ENCODE measurements at regions of chr19 and their contacts with region 1.

Region 1: DNA sequence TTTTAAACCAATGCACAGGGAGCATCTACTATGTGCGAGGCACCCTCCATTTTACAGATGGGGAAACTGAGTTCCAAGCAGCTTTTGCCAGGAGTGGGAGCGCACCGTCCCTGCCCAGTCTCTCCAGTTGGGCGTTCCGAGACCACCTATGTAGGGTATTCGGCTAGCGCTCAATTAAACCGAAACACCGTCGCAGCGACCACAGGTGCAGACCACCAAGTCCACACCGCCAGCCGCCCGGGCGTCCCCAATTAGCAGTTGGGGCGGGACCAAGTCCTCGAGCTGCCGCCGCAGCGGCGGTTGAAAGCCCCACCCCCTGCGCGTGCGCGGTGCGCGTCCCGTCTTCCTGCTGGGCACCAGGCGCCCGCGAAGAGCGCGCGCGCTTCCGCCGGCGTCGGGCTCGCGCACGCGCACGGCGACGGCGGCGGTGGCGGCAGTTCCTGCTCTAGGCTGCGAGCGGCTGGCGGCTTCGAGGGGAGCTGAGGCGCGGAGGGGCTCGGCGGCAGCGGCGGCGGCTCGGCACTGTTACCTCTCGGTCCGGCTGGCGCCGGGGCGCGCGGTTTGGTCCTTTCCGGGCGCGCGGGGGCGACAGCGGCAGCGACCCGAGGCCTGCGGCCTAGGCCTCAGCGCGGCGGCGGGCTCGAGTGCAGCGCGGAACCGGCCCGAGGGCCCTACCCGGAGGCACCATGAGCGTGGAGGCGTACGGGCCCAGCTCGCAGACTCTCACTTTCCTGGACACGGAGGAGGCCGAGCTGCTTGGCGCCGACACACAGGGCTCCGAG is at the start of gene UPF1:
- DNase-seq: peak; percentile 96 to 98
- ATAC-seq: peak; percentile 81 to 91 (median 88)
- H3K4me3 ChIP-seq: peak within 1 kb of the TSS; percentile 64
- H3K4me3 Mint-ChIP-seq: peak within 1 kb of the TSS; percentile 93
- H3K27ac ChIP-seq: peak within 1 kb of the TSS; percentile 66
- H3K27ac Mint-ChIP-seq: peak within 1 kb of the TSS; percentile 89 to 91
- H3K4me1 ChIP-seq: peaks cover 37% of the 10 kb centered on the region
- H3K4me1 Mint-ChIP-seq: peaks cover 39% of the 10 kb centered on the region in 2 donors
- H3K27me3 ChIP-seq: no peaks in the 10 kb centered on the region
- H3K27me3 Mint-ChIP-seq: peaks cover 3 to 9% of the 10 kb centered on the region in 2 donors
- CTCF ChIP-seq: no peak
- total RNA-seq, gene UPF1: 123 to 140 (median 138) TPM

Region 2: DNA sequence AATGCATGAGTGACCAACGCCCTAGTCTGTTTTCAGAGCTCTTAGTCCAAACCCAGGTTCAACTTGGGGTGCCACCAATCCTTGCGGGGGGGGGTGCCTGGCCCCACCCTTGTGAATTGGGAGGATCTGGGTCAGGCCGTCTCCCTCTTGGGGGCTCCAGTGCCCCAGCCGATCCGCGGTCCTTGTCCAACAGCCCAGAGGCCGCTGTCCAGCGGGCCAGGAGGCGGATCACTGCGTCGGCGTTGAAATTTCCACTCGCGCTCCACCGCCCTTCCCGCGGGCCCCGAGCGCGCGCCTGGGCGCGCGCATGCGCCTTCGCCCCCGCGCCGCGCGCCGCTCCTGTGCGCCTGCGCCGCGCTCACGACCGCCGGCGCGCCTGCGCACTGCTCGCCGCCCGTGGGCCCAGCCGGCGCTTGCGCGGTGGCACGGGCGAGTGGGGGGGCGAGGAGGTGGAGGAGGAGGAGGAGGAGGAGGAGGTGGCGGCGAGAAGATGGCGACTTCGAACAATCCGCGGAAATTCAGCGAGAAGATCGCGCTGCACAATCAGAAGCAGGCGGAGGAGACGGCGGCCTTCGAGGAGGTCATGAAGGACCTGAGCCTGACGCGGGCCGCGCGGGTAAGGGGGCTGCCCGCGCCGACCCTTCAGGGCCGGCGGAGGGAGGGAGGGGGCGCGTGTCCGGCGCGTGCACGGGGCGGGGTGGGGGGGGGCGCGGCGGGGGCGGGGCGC is 148.3 kb before region 1 on chr19 and contains the start of gene CRTC1:
- intact Hi-C with region 1: loop called (anchors 2 kb)
- DNase-seq: peak; percentile 93 to 97
- ATAC-seq: peak; percentile 89 to 92 (median 91)
- H3K4me3 ChIP-seq: peak within 1 kb of the TSS; percentile 69
- H3K4me3 Mint-ChIP-seq: peak within 1 kb of the TSS; percentile 88
- H3K27ac ChIP-seq: peak within 1 kb of the TSS; percentile 68
- H3K27ac Mint-ChIP-seq: peak within 1 kb of the TSS; percentile 74 to 82
- H3K4me1 ChIP-seq: peaks cover 23% of the 10 kb centered on the region
- H3K4me1 Mint-ChIP-seq: peaks cover 0 to 5% of the 10 kb centered on the region in 2 donors
- H3K27me3 ChIP-seq: no peaks in the 10 kb centered on the region
- H3K27me3 Mint-ChIP-seq: no peaks in the 10 kb centered on the region
- CTCF ChIP-seq: no peak
- total RNA-seq, gene CRTC1: 14.1 to 17.0 (median 14.3) TPM

Region 3: GRCh38 chr19:18865973-18866799 is 34.5 kb after region 1 on chr19:
- intact Hi-C with region 1: no loop called
- DNase-seq: peak; percentile 60 to 79
- ATAC-seq: peak; percentile 72 to 83 (median 81)
- H3K4me3 ChIP-seq: no peak overlapping the region
- H3K4me3 Mint-ChIP-seq: no peak overlapping the region
- H3K27ac ChIP-seq: no peak overlapping the region
- H3K27ac Mint-ChIP-seq: no peak overlapping the region
- H3K4me1 ChIP-seq: peaks cover 20% of the 10 kb centered on the region
- H3K4me1 Mint-ChIP-seq: peaks cover 0 to 17% of the 10 kb centered on the region in 2 donors
- H3K27me3 ChIP-seq: peaks cover 2% of the 10 kb centered on the region
- H3K27me3 Mint-ChIP-seq: peaks cover 0 to 6% of the 10 kb centered on the region in 2 donors
- CTCF ChIP-seq: peak; percentile 83